Naive thymus-derived CD8-positive, alpha-beta T cell (primary cell): ENCODE measurements at regions of chr1 and their contacts with region 1.

Region 1: GRCh38 chr1:26744075-26744959 is 43.4 kb upstream of the PIGV start:
- DNase-seq: peak; percentile 39 to 87 (median 74)
- ATAC-seq: peak; percentile 90 to 94
- H3K4me3 Mint-ChIP-seq: peak overlapping the region; percentile 60 to 86 (median 78)
- H3K27ac Mint-ChIP-seq: peak overlapping the region; percentile 87 to 96 (median 93)
- H3K4me1 Mint-ChIP-seq: peaks cover 43 to 93% (median 83%) of the 10 kb centered on the region in 4 donors
- H3K27me3 Mint-ChIP-seq: no peaks in the 10 kb centered on the region

Region 2: GRCh38 chr1:26496861-26497260 is 247.5 kb before region 1 on chr1:
- POLR2A ChIA-PET with region 1: no interaction called
- DNase-seq: no peak
- ATAC-seq: no peak
- H3K4me3 Mint-ChIP-seq: no peak overlapping the region
- H3K27ac Mint-ChIP-seq: peak overlapping the region in 2 of 10 donors; percentile 4 to 27
- H3K4me1 Mint-ChIP-seq: peaks cover 7 to 15% (median 11%) of the 10 kb centered on the region in 4 donors
- H3K27me3 Mint-ChIP-seq: no peaks in the 10 kb centered on the region

Region 3: DNA sequence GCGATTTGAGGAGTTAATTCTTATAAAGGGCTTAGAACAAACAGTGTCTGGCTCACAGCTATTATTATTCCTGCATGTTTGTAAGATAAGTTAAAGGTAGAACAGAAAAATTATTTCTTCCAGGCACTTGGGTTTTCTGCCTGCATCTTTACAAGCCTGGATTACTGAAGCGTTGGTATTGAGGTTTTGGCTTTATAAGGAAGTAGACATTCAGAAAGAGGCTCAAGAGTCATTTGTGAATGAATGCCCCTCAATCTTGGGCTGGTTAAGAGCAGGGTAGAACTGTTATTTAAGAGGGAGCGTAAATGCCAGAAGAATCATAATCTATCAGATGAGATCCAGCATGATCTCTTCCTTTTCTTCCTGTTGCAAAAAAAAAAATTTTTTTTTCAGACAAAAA is 125.8 kb before region 1 on chr1:
- POLR2A ChIA-PET with region 1: no interaction called
- DNase-seq: no peak
- ATAC-seq: no peak
- H3K4me3 Mint-ChIP-seq: peak overlapping the region in 3 of 10 donors; percentile 5 to 40 (median 22)
- H3K27ac Mint-ChIP-seq: peak overlapping the region in 8 of 10 donors; percentile 52 to 98 (median 64)
- H3K4me1 Mint-ChIP-seq: peaks cover 22 to 37% (median 33%) of the 10 kb centered on the region in 4 donors
- H3K27me3 Mint-ChIP-seq: no peaks in the 10 kb centered on the region

Region 4: DNA sequence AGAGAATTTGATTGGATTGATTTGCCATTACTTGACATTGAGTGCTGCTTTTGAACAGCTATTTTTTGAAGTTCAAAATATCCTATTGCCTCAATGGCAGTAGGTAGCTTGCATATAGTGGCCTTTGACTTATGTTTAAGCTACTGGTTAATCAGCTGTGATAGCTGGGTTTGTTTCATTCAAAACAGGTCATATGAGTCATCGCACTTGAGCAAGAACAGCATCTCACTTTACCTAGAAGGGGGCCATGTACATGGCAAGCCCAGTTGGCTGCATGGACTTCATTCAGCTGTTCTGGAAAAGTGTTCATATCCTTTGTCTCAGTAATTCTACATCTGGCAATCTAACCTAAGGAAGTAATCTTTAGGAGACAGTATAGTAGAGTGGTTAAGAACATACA is 77.5 kb before region 1 on chr1:
- POLR2A ChIA-PET with region 1: no interaction called
- DNase-seq: no peak
- ATAC-seq: no peak
- H3K4me3 Mint-ChIP-seq: no peak overlapping the region
- H3K27ac Mint-ChIP-seq: no peak overlapping the region
- H3K4me1 Mint-ChIP-seq: no peaks in the 10 kb centered on the region
- H3K27me3 Mint-ChIP-seq: no peaks in the 10 kb centered on the region

Region 5: GRCh38 chr1:26705788-26706311 is 38.5 kb before region 1 on chr1:
- POLR2A ChIA-PET with region 1: interaction called, 12 read pairs
- DNase-seq: no peak
- ATAC-seq: peak in 1 of 2 donors; percentile 38
- H3K4me3 Mint-ChIP-seq: peak overlapping the region; percentile 27 to 73 (median 60)
- H3K27ac Mint-ChIP-seq: peak overlapping the region; percentile 20 to 84 (median 73)
- H3K4me1 Mint-ChIP-seq: peaks cover 25 to 47% (median 29%) of the 10 kb centered on the region in 4 donors
- H3K27me3 Mint-ChIP-seq: no peaks in the 10 kb centered on the region

Region 6: DNA sequence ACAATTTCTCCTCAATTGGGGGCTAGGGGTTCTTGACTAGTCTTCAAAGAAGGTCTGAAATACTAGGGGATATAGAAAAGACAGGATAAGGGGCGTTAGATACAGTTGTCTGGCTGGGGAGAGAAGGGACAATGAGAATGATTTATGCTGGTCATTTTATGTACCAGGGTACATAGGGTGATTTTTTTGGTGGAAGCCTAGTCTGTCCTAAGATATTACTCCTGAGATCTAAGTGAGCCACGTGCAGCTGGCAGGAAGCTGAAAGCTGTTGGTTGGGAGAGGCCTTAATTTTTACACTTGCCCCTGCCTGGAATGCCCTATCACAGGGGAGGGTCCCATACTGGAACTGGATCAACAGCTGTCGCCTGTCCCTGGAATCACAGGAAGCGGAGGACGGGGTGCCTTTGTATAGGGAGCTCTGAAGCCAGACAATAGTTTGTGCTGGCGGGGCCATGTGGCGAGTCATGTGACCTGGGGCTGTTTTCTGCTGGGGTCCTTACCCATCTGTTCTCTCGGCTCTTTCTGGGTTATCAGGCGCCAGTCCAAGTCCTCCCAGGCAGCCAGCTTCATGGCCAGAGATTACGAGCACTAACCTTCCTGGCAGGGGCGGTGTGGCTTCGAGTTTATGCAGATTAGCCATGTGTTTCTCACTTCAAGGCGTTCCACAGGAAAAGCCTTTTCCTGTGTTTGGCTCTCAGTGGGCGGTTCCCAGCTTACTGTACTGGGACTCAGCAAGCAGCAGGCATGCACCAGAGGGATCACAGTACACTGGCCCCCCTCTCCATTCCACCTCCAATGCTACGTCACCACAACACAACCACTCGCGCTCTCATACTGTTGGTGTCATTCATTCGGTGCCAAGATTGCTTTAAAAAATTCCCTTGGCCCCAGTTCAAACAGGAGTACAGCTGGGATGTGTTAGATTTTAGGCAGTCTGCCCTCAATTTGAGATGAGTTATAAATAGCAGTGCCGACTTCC is 21.0 kb before region 1 on chr1:
- POLR2A ChIA-PET with region 1: interaction called, 21 read pairs
- DNase-seq: peak; percentile 14 to 71 (median 35)
- ATAC-seq: peak; percentile 62 to 80
- H3K4me3 Mint-ChIP-seq: peak overlapping the region; percentile 61 to 88 (median 78)
- H3K27ac Mint-ChIP-seq: peak overlapping the region; percentile 4 to 93 (median 82)
- H3K4me1 Mint-ChIP-seq: peaks cover 48 to 96% (median 86%) of the 10 kb centered on the region in 4 donors
- H3K27me3 Mint-ChIP-seq: no peaks in the 10 kb centered on the region

Region 7: GRCh38 chr1:26728645-26729044 is 15.7 kb before region 1 on chr1:
- POLR2A ChIA-PET with region 1: interaction called, 21 read pairs
- DNase-seq: no peak
- ATAC-seq: no peak
- H3K4me3 Mint-ChIP-seq: peak overlapping the region in 5 of 10 donors; percentile 1 to 44 (median 20)
- H3K27ac Mint-ChIP-seq: peak overlapping the region; percentile 2 to 86 (median 63)
- H3K4me1 Mint-ChIP-seq: peaks cover 39 to 90% (median 84%) of the 10 kb centered on the region in 4 donors
- H3K27me3 Mint-ChIP-seq: no peaks in the 10 kb centered on the region

Region 8: DNA sequence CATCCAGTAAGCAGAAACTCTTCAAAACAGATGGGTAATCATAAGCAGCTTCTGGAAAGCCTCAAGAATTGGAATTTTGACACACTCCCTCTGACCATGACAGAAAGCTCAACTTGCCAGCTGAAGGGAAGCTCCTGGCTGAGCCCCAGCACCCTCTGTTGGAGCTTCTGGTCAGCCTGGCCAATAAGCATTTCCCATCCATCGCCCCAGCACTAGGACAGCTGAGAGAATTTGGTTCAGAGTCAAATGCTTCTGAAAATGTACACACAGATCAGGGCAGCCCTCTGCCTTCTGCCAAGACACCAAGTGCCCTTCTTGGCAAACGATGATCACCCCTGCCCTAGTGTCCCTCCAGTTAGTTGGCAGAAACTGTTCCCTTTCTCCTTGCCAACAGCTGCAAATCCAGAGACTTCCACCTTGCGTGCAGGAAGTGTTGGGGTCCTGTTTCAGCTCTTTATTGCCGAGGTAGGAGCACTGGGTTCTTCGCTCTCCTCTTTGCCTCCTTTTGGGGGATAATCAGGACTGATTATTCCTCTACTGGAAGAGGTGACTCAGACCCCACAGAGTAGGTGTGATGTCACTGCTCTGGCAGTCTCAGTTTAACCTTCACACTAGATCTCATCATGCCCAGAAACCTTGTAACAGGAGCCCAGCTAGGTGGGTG is 55.3 kb after region 1 on chr1:
- POLR2A ChIA-PET with region 1: no interaction called
- DNase-seq: no peak
- ATAC-seq: peak; percentile 47 to 61
- H3K4me3 Mint-ChIP-seq: peak overlapping the region; percentile 47 to 86 (median 72)
- H3K27ac Mint-ChIP-seq: peak overlapping the region; percentile 90 to 99 (median 96)
- H3K4me1 Mint-ChIP-seq: peaks cover 25 to 40% (median 38%) of the 10 kb centered on the region in 4 donors
- H3K27me3 Mint-ChIP-seq: no peaks in the 10 kb centered on the region